Activated T-helper 1 cell treated with anti-CD3 and anti-CD28 coated beads, Interleukin-12 subunit alpha, Interleukin-12 subunit beta, Interleukin-2, Interleukin-4 antibody, amounts not matched to agents 30 ng/mL and 10 ng/mL and 1 ng/mL, durations not matched to agents 14 hours and 24 hours and 36 hours (primary cell): ENCODE measurements at regions of chr14 and their contacts with region 1.

Region 1: GRCh38 chr14:100078991-100079725 is 13.9 kb downstream of the EVL start:
- DNase-seq: peak; percentile 82
- H3K4me3 Mint-ChIP-seq: peak overlapping the region; percentile 75
- H3K27ac Mint-ChIP-seq: peak overlapping the region; percentile 92
- H3K4me1 Mint-ChIP-seq: peaks cover 97% of the 10 kb centered on the region
- H3K27me3 Mint-ChIP-seq: no peaks in the 10 kb centered on the region

Region 2: DNA sequence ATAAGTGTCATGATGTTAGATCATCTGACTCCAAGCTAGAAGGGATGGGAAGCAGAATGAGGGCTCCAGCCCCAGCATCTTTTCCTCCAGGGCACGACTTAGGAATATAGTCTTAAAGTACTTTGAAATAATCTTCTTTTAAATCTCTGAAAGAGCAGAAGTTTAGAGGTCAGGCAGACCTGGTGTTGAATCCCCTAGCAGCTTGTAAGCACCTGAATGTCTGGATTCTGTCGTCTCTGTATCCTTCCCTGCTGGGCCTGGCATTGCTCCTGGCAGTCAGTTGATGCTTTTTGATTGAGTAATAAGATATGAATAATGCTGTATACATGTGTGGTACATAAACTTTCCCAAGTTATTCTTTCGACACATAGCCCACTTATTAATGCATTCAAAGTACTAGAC is 17.4 kb after region 1 on chr14:
- intact Hi-C with region 1: loop called (anchors 1 kb)
- DNase-seq: no peak
- H3K4me3 Mint-ChIP-seq: no peak overlapping the region
- H3K27ac Mint-ChIP-seq: peak overlapping the region; percentile 70
- H3K4me1 Mint-ChIP-seq: peaks cover 84% of the 10 kb centered on the region
- H3K27me3 Mint-ChIP-seq: no peaks in the 10 kb centered on the region